ENCODE measurements at regions of chr3 and their contacts with region 1.

Region 1: DNA sequence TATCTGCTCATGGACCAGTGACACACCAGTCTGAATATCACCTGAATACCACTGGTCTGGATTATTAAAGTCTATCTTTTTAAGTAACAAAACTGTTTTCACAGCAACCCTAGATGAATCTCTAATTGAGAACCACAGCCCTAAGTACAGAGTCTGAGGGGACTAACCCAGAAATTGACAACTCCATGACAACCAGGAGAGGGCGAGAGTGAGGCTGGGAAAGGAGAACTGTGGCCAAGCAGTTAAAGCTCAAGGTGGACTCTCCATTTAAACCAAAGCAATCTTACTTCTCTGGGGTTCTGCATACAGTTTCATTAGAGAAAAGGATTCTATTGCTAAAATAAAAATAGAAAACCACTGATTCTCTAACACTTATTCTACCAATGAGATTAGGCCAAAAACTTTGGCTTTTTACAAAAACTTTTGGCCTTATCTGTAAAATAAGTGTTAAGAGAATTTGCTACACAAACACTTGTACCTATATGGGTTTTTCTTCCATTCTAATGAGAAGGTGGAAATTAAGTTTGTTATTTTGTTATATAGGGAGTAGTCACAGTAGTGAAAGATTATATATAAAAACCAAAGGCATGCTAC is 11.4 kb downstream of the NEK10 start:
- DNase-seq: peak; percentile 83
- ATAC-seq: peak; percentile 90
- H3K4me3 ChIP-seq: no peak overlapping the region
- H3K27ac ChIP-seq: no peak overlapping the region
- H3K4me1 ChIP-seq: peaks cover 13% of the 10 kb centered on the region
- H3K27me3 ChIP-seq: no peaks in the 10 kb centered on the region
- CTCF ChIP-seq: peak; percentile 87

Region 2: GRCh38 chr3:27034255-27034654 is 323.5 kb before region 1 on chr3:
- CTCF ChIA-PET with region 1: no interaction called
- POLR2A ChIA-PET with region 1: no interaction called
- intact Hi-C with region 1: no loop called
- DNase-seq: no peak
- ATAC-seq: no peak
- H3K4me3 ChIP-seq: no peak overlapping the region
- H3K27ac ChIP-seq: no peak overlapping the region
- H3K4me1 ChIP-seq: no peaks in the 10 kb centered on the region
- H3K27me3 ChIP-seq: no peaks in the 10 kb centered on the region
- CTCF ChIP-seq: no peak

Region 3: GRCh38 chr3:27345492-27345891 is 12.3 kb before region 1 on chr3:
- CTCF ChIA-PET with region 1: interaction called, 4 read pairs
- POLR2A ChIA-PET with region 1: no interaction called
- intact Hi-C with region 1: loop called (anchors 2 kb)
- DNase-seq: peak; percentile 48
- ATAC-seq: peak; percentile 73
- H3K4me3 ChIP-seq: no peak overlapping the region
- H3K27ac ChIP-seq: no peak overlapping the region
- H3K4me1 ChIP-seq: peaks cover 19% of the 10 kb centered on the region
- H3K27me3 ChIP-seq: no peaks in the 10 kb centered on the region
- CTCF ChIP-seq: no peak

Region 4: DNA sequence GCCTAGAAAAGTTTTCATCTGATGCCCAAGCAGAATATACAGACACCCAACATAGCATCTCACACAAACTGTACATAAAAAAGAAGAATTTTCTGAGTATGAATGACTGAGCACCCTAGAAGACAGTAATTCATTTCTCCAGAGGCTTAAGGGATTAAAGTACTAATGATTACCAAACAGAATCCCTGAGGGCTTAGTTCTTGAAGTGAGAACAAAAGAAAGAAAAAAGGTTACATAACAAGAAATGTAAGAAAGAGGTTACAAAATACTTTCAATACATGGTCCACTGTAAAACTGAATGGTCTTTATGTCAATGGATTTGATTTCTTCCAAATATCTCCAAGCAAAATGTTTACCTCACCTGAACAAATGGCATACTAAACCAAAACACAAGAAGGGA is 20.6 kb after region 1 on chr3:
- CTCF ChIA-PET with region 1: no interaction called
- POLR2A ChIA-PET with region 1: no interaction called
- intact Hi-C with region 1: no loop called
- DNase-seq: no peak
- ATAC-seq: no peak
- H3K4me3 ChIP-seq: no peak overlapping the region
- H3K27ac ChIP-seq: no peak overlapping the region
- H3K4me1 ChIP-seq: no peaks in the 10 kb centered on the region
- H3K27me3 ChIP-seq: no peaks in the 10 kb centered on the region
- CTCF ChIP-seq: no peak

Region 5: DNA sequence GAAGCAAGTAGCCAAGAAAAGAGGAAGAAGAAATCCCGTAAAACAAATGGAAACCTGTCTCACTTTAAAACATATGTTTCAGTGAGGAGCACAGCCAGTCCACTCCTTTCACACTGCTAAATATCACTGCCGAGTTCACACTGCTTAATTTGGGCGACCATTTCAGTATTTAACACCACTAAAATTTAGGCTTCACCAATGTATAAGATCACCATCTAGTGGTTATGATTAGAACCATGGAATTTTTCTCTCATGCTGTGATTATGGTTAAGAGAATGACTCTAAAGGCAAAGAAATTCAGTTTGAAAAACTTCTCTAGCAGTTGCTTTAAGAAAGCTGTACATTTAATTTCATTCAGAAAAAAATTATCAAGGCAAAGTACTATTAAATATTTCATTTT is 109.8 kb after region 1 on chr3:
- CTCF ChIA-PET with region 1: no interaction called
- POLR2A ChIA-PET with region 1: no interaction called
- intact Hi-C with region 1: loop called (anchors 1 kb)
- DNase-seq: peak; percentile 72
- ATAC-seq: peak; percentile 81
- H3K4me3 ChIP-seq: no peak overlapping the region
- H3K27ac ChIP-seq: no peak overlapping the region
- H3K4me1 ChIP-seq: 0 out of 2 replicates have a peak, but pooled peaks cover 10% of the 10 kb centered on the region
- H3K27me3 ChIP-seq: no peaks in the 10 kb centered on the region
- CTCF ChIP-seq: peak; percentile 79